ENCODE measurements at regions of chr11 and their contacts with region 1.

Region 1: DNA sequence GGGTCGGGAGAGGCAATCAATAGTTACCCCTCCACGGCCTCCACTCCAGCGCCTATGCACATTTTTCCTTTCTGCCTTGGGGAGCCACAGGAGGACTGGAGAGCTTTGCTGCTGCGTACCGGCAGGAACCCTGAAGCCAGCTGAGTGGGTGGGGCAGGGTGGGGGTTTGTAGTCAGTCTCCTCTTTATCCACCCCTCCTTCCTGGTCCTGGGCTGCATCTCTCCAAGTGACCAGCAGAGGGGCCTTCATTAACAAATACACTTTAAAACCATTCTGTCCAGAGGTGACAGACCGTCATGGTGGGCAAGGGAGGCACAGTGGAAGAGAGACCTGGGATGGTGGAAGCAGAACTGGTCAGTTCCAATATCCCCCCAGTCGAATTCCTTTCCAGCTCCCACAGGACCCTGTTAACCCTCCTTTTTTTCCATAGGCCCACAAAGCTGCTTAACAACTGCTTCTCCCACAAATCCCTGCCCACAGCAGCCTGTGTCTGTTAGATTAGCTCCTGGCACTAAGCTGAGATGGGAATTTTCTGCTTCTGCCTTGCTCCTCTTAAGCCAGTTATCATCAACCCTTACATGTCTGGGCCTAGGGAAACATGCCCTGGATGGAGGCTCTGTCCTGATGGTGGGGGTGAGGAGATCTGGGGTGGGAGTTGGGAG is 3.9 kb upstream of the ABCG4 start:
- DNase-seq: peak; percentile 34
- H3K4me3 Mint-ChIP-seq: no peak overlapping the region
- H3K27ac Mint-ChIP-seq: no peak overlapping the region
- H3K4me1 Mint-ChIP-seq: peaks cover 8% of the 10 kb centered on the region
- H3K27me3 Mint-ChIP-seq: peaks cover 46% of the 10 kb centered on the region

Region 2: DNA sequence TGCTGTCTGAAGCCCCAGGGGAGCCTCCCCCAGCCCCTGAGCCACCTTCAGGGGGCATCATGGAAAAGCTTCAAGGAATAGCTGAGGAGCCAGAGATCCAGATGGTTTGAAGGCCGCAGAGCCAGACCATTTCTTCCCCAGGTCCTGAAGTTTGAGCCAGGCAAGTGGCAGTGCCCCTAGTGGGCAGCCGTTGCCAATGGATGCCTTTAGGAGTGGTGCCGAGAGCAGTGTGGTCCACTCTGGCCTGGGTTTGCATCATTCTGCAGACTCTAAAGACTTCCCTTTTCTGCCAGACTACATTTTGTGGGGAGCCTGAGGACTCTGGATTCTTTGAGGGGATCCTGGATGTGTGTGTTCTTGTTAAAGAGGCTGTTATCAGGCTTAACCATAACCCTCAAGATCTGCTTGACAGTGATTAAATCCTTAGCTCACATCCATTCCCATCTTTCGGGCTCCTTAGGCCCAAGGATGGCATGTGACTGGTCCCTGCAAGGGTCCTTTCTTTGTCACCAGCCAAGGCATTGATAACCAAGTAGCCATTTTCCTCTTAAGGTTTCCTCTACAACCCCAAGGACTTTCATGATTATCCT is 10.5 kb before region 1 on chr11:
- CTCF ChIA-PET with region 1: interaction called, 10 read pairs
- POLR2A ChIA-PET with region 1: no interaction called
- DNase-seq: no peak
- H3K4me3 Mint-ChIP-seq: no peak overlapping the region
- H3K27ac Mint-ChIP-seq: no peak overlapping the region
- H3K4me1 Mint-ChIP-seq: no peaks in the 10 kb centered on the region
- H3K27me3 Mint-ChIP-seq: peaks cover 13% of the 10 kb centered on the region